Sigmoid colon (tissue), 7 donors: ENCODE measurements at regions of chr2 and their contacts with region 1.

Region 1: DNA sequence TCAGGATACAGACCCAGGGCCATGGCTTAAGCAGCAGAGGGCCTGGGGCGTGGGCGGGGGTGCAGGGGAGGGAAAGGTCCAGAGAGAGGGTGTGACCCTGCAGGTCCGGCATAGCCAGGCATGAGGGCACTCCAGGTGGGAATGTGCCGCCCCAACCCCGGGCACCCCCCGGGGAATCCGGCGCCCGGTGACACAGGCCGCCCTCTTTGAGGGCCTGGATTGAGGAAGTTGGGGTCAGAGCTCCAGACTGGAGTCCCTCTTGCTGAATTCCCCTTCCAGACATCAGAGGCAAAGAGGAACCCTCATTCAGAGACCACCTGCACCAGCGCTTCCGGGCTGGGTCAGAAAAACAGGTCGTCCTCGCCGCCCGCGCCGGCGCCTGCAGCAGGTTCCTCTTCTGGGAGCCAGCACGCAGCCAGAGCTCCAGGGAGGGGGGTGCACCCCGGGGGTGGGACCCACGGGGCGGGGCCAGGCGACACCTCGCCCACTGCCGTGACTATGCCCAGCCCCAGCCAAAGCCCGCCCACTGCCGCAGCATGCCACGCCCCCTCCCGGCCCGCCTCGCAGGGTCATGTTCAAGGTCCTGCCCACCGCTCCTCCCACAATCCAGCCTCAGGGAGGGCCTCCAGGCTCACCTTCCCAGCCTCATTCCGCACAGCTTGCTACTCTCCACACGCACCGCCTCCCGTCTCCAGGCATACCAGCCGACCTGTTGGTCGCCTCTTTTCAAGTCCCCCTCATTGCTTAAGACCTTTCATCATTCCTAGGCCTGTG is 98.3 kb upstream of the ID2 start:
- DNase-seq: peak; percentile 98
- H3K4me3 ChIP-seq: peak overlapping the region in 3 of 4 donors; percentile 21 to 32 (median 25)
- H3K27ac ChIP-seq: peak overlapping the region; percentile 60 to 80 (median 68)
- H3K4me1 ChIP-seq: peaks cover 0 to 18% (median 16%) of the 10 kb centered on the region in 4 donors
- H3K27me3 ChIP-seq: no peaks in the 10 kb centered on the region
- CTCF ChIP-seq: no peak
- EP300 ChIP-seq: no peak
- POLR2A ChIP-seq: peak in 1 of 2 donors; percentile 4

Region 2: GRCh38 chr2:8132351-8132831 is 451.2 kb before region 1 on chr2:
- intact Hi-C with region 1: no loop called
- DNase-seq: no peak
- H3K4me3 ChIP-seq: no peak overlapping the region
- H3K27ac ChIP-seq: no peak overlapping the region
- H3K4me1 ChIP-seq: peaks cover 0 to 20% (median 12%) of the 10 kb centered on the region in 4 donors
- H3K27me3 ChIP-seq: no peaks in the 10 kb centered on the region
- CTCF ChIP-seq: no peak
- EP300 ChIP-seq: no peak
- POLR2A ChIP-seq: no peak

Region 3: GRCh38 chr2:8546612-8547283 is 36.8 kb before region 1 on chr2:
- intact Hi-C with region 1: loop called (anchors 1 kb)
- DNase-seq: peak; percentile 17
- H3K4me3 ChIP-seq: no peak overlapping the region
- H3K27ac ChIP-seq: no peak overlapping the region
- H3K4me1 ChIP-seq: peaks cover 0 to 15% (median 4%) of the 10 kb centered on the region in 4 donors
- H3K27me3 ChIP-seq: no peaks in the 10 kb centered on the region
- CTCF ChIP-seq: no peak
- EP300 ChIP-seq: no peak
- POLR2A ChIP-seq: no peak

Region 4: GRCh38 chr2:8662239-8662895 is 78.8 kb after region 1 on chr2:
- intact Hi-C with region 1: loop called (anchors 5 kb)
- DNase-seq: no peak
- H3K4me3 ChIP-seq: no peak overlapping the region
- H3K27ac ChIP-seq: peak overlapping the region in 3 of 4 donors; percentile 67 to 78 (median 75)
- H3K4me1 ChIP-seq: peaks cover 0 to 19% (median 15%) of the 10 kb centered on the region in 4 donors
- H3K27me3 ChIP-seq: no peaks in the 10 kb centered on the region
- CTCF ChIP-seq: no peak
- EP300 ChIP-seq: no peak
- POLR2A ChIP-seq: no peak